Activated CD8-positive, alpha-beta T cell treated with anti-CD3 and anti-CD28 coated beads for 36 hours (primary cell): ENCODE measurements at regions of chr2 and their contacts with region 1.

Region 1: DNA sequence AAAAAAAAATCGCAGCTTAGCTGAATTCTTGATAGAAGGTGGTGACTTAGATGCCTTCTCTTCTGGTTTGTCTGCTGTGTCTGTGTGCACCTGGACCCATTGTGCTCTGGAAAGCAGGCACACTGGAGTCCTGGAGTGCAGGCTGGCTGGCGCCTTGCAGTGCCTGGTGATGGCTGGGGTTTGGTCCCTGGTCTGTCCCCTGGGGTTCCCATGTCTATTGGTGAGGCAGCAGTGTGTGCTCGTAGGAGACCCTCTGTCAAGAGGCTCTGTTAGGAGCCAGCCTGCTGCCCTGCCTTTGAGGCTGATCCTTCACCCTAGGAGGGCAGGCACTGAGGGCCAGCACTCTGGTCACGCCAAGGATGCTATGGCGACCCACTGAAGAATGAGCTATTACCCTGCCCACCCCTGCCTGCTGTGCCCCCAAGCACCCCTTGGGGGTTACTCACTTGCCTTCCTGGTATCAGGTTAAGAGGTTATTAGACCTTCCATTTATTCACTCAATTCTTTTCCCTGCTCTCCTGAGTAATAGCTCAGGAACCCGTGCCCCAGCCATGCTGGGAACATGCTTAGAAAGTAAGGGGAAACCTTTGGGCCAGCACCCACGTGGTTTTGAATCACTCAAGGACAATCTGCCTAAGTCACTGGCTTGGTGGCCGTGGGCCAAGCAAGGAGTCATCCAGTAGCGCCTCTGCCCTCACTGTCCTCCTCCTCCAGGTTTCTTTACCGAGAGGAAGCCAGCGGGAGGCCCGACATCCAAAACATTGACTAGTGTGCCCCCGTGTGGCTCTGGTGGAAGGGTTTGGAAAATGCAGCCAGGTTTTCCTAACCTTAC is 284.5 kb downstream of the PRKCE start:
- DNase-seq: peak; percentile 71
- ATAC-seq: peak; percentile 87
- H3K4me3 Mint-ChIP-seq: no peak overlapping the region
- H3K27ac Mint-ChIP-seq: no peak overlapping the region
- H3K4me1 Mint-ChIP-seq: peaks cover 3% of the 10 kb centered on the region
- H3K27me3 Mint-ChIP-seq: no peaks in the 10 kb centered on the region
- CTCF ChIP-seq: peak; percentile 51

Region 2: GRCh38 chr2:45643543-45644542 is 292.2 kb before region 1 on chr2:
- CTCF ChIA-PET with region 1: interaction called, 15 read pairs
- POLR2A ChIA-PET with region 1: no interaction called
- intact Hi-C with region 1: loop called (anchors 5 kb)
- DNase-seq: peak; percentile 68
- ATAC-seq: peak; percentile 98
- H3K4me3 Mint-ChIP-seq: peak overlapping the region; percentile 31
- H3K27ac Mint-ChIP-seq: no peak overlapping the region
- H3K4me1 Mint-ChIP-seq: peaks cover 4% of the 10 kb centered on the region
- H3K27me3 Mint-ChIP-seq: peaks cover 19% of the 10 kb centered on the region
- CTCF ChIP-seq: peak; percentile 86

Region 3: DNA sequence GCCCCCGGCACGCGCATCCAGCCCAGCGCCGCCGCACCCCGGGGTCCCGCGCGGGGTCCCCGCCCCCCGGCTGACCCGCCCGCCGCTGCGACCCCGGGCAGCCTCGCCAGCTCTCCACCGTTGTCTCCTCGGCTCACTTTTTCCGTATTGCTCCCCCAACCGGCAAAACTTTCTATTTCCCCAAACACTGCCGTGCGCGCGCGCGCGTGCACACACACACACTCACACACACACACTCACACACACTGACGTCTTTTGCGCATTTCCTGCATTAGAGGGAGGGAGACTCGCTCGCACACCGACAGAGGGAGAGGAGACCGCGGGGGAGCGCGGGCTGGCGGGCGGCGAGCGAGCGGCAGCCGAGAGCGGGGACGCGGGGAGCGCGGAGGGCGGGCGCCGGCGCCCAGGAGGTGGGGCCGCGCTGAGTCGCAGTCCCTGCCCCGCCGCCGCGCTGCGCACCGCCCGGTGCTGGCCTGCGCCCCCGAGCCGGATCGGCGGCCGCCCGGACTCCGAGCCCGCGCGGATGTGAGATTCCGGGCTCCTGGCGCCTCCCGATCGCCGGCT is 285.1 kb before region 1 on chr2:
- CTCF ChIA-PET with region 1: interaction called, 15 read pairs
- POLR2A ChIA-PET with region 1: no interaction called
- intact Hi-C with region 1: no loop called
- DNase-seq: peak; percentile 95
- ATAC-seq: peak; percentile 87
- H3K4me3 Mint-ChIP-seq: peak overlapping the region; percentile 84
- H3K27ac Mint-ChIP-seq: peak overlapping the region; percentile 90
- H3K4me1 Mint-ChIP-seq: peaks cover 17% of the 10 kb centered on the region
- H3K27me3 Mint-ChIP-seq: peaks cover 5% of the 10 kb centered on the region
- CTCF ChIP-seq: peak; percentile 14

Region 4: GRCh38 chr2:45954233-45954850 is 18.3 kb after region 1 on chr2:
- CTCF ChIA-PET with region 1: no interaction called
- POLR2A ChIA-PET with region 1: no interaction called
- intact Hi-C with region 1: no loop called
- DNase-seq: no peak
- ATAC-seq: no peak
- H3K4me3 Mint-ChIP-seq: no peak overlapping the region
- H3K27ac Mint-ChIP-seq: no peak overlapping the region
- H3K4me1 Mint-ChIP-seq: peaks cover 7% of the 10 kb centered on the region
- H3K27me3 Mint-ChIP-seq: no peaks in the 10 kb centered on the region
- CTCF ChIP-seq: no peak